Common myeloid progenitor, CD34-positive (primary cell): ENCODE measurements at regions of chr16 and their contacts with region 1.

Region 1: DNA sequence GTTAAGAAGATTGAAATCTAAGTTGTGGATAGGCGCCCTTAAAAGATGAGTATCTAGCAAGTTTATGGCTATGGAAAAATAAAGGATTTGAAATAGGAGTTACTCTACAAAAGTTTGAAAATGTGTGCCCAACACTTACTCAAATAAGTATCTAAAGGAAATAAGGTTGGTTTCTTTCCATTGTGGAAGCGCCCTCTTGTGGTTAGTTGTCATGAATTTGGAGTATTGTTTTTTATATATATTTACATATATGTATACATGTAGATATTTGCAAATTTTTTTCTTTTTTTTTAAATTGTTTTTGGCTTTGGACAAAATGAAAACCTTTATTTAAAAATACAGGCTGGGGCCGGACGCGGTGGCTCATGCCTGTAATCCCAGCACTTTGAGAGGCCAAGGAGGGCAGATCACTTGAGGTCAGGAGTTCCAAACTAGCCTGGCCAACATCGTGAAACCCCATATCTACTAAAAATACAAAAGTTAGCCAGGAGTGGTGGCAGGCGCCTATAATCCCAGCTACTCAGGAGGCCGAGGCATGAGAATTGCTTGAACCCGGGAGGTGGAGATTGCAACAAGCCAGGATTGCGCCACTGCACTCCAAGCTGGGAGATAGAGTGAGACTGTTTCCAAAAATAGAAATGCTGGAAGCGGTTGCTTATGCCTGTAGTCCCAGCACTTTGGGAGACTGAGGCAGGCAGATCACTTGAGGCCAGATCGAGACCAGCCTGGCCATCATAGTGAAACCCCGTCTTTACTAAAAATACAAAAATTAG is 24.0 kb upstream of the VPS4A start:
- DNase-seq: peak; percentile 73 to 85 (median 79)
- H3K4me3 ChIP-seq: no peak overlapping the region
- H3K27ac ChIP-seq: no peak overlapping the region
- H3K4me1 ChIP-seq: no peaks in the 10 kb centered on the region
- H3K27me3 ChIP-seq: no peaks in the 10 kb centered on the region

Region 2: DNA sequence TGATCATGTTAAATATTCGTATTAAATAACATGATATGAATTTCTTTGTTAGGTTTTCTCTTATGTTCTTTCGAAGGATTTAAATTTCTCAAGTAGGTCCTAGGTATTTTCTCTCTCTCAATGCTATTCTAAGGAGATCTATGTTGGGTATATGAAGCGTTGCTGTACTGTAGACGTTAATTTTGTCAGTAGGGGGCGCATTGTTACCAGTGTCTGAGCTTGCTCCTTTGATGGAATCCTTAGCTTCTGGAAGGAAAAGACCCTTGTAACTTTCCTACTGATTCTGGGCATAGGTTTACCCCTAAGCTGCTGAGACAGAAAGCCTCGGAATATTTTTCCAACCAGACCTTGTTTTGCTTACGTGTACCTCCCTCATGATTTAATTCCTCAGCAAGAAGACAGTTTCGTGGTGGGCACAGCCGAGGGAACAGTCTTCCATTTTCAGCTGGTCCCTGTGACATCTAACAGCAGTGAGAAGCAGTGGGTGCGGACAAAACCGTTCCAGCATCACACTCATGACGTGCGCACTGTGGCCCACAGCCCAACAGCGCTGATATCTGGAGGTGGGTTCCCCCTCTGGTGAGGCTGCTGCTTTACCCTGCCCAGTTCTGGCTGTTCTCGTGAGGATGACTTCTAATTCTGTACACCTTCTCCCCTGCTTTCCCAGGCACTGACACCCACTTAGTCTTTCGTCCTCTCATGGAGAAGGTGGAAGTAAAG is 136.8 kb before region 1 on chr16:
- CTCF ChIA-PET with region 1: interaction called, 155 read pairs
- POLR2A ChIA-PET with region 1: interaction called, 5 read pairs
- DNase-seq: peak; percentile 69 to 81 (median 74)
- H3K4me3 ChIP-seq: no peak overlapping the region
- H3K27ac ChIP-seq: no peak overlapping the region
- H3K4me1 ChIP-seq: no peaks in the 10 kb centered on the region
- H3K27me3 ChIP-seq: no peaks in the 10 kb centered on the region

Region 3: DNA sequence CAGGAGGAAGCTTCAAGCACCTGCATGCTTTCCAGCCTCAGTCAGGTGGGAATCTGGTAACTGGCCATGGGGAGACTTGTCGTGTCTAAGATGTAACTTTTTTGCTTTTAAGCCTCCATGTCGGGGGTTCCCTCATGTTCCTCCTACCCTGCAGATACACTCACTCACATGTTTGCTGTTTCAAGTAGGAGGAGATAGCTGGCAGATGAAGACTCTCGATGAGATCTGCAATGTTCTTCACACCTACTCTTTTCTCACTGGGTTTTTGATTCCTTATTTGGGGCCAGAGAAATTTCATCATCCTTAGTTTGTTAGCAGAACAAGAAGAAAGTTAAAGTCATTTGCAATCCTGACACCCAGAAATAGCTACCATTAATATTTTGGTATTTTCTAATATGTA is 129.9 kb before region 1 on chr16:
- CTCF ChIA-PET with region 1: interaction called, 155 read pairs
- POLR2A ChIA-PET with region 1: interaction called, 8 read pairs
- DNase-seq: no peak
- H3K4me3 ChIP-seq: no peak overlapping the region
- H3K27ac ChIP-seq: no peak overlapping the region
- H3K4me1 ChIP-seq: no peaks in the 10 kb centered on the region
- H3K27me3 ChIP-seq: no peaks in the 10 kb centered on the region

Region 4: DNA sequence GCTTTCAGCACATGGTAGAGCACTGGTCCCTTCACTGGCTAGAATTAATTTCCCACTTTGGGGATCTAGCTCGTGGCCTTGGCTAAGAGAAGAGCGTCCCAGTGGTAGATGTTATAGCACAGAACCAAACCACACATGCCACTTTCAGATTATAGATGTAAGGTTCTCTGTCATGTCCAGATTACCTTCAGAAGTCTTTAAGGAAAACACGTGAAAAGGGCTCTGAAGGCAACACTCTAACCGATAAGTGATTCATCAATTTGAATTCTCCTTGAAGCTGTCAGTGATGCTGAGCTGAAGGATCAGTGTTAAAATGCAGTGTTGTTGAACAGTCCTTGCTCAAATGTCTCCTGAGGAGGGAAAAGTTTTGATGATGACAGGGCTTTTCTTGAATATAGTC is 19.5 kb before region 1 on chr16:
- CTCF ChIA-PET with region 1: interaction called, 11 read pairs
- POLR2A ChIA-PET with region 1: no interaction called
- DNase-seq: no peak
- H3K4me3 ChIP-seq: no peak overlapping the region
- H3K27ac ChIP-seq: no peak overlapping the region
- H3K4me1 ChIP-seq: peaks cover 0 to 11% (median 6%) of the 10 kb centered on the region in 4 experiments
- H3K27me3 ChIP-seq: no peaks in the 10 kb centered on the region

Region 5: DNA sequence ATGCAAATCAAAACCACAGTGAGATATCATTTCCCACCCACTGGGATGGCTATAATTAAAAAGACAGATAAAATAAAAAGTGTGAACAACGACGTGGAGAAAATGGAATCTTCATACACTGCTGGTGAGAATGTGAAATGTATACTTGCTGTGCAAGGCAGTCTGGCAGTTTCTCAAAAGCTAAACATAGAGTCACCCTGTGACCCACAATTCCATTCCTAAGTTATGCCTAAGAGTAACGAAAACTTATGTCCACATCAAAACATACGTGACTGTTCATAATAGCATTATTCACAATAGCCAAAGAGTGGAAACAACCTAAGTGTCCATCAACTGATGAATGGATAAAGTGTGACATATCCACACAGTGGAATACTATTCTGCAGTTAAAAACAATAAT is 14.1 kb before region 1 on chr16:
- CTCF ChIA-PET with region 1: interaction called, 11 read pairs
- POLR2A ChIA-PET with region 1: no interaction called
- DNase-seq: no peak
- H3K4me3 ChIP-seq: no peak overlapping the region
- H3K27ac ChIP-seq: no peak overlapping the region
- H3K4me1 ChIP-seq: peaks cover 0 to 11% (median 6%) of the 10 kb centered on the region in 4 experiments
- H3K27me3 ChIP-seq: no peaks in the 10 kb centered on the region